Activated CD4-positive, alpha-beta T cell treated with anti-CD3 and anti-CD28 coated beads, Interleukin-2, amount 10 ng/mL, durations not matched to agents 24 days and 14 days (primary cell): ENCODE measurements at regions of chr5 and their contacts with region 1.

Region 1: GRCh38 chr5:78294248-78295034 is at the start of gene AP3B1:
- DNase-seq: peak; percentile 99
- H3K4me3 Mint-ChIP-seq: peak within 1 kb of the TSS; percentile 88
- H3K27ac Mint-ChIP-seq: peak within 1 kb of the TSS; percentile 97
- H3K4me1 Mint-ChIP-seq: peaks cover 26% of the 10 kb centered on the region
- H3K27me3 Mint-ChIP-seq: peaks cover 10% of the 10 kb centered on the region
- total RNA-seq, gene AP3B1: 40.1 and 45.5 TPM in 2 replicates

Region 2: GRCh38 chr5:77560677-77561263 is 733.7 kb before region 1 on chr5:
- intact Hi-C with region 1: loop called (anchors 10 kb)
- DNase-seq: no peak
- H3K4me3 Mint-ChIP-seq: no peak overlapping the region
- H3K27ac Mint-ChIP-seq: no peak overlapping the region
- H3K4me1 Mint-ChIP-seq: no peaks in the 10 kb centered on the region
- H3K27me3 Mint-ChIP-seq: peaks cover 17% of the 10 kb centered on the region

Region 3: DNA sequence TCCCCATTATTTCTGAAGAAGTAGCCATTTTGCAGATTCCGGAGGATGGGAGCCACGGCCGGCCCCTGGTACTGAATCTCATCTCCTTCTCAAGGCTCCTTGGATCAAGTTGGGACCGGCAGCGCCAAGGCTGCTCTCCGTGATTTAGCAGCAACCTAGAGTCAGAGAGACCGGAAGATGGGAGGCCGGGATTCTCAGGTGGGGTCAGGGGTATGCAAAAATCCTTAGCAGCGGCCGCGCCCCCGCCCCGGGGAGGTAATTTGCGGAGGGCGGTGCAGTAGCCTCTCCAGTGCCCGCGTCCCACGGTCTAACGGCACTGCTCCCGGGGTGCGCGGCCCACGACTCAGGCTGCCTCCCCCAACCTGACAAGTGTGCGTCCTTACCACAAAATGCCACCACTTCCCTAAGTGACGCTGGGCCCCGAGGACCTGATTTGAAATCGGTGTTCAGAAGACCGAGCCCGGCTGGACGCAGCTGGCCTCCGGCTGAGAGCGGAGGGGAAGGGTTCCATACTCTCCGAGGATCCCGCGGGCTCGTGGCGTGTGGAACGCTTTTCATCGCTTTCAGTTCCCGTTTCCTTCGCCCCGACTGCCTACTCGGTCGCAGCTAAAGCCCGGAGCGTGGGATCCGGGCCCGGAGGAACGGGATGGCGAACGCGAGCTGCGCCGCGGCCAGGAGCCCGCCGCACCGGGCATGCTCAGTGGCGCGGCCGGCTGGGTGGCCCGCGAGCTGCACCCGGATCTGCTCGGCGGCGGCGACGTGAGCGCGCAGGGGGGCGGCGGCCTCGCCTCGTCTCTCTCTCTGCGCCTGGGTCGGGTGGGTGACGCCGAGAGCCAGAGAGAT is 65.6 kb after region 1 on chr5 and contains the start of gene SCAMP1:
- intact Hi-C with region 1: loop called (anchors 1 kb)
- DNase-seq: peak; percentile 98
- H3K4me3 Mint-ChIP-seq: peak within 1 kb of the TSS; percentile 97
- H3K27ac Mint-ChIP-seq: peak within 1 kb of the TSS; percentile 98
- H3K4me1 Mint-ChIP-seq: peaks cover 28% of the 10 kb centered on the region
- H3K27me3 Mint-ChIP-seq: no peaks in the 10 kb centered on the region
- total RNA-seq, gene SCAMP1: 20.8 and 23.1 TPM in 2 replicates